ENCODE measurements at regions of chr1 and their contacts with region 1.

Region 1: GRCh38 chr1:172144445-172145061 is 275.9 kb upstream of the C1orf105 start:
- DNase-seq: peak; percentile 82 to 91 (median 87)
- H3K4me3 ChIP-seq: peak overlapping the region; percentile 38
- H3K27ac ChIP-seq: peak overlapping the region; percentile 54 to 89
- H3K4me1 ChIP-seq: no peaks in the 10 kb centered on the region
- H3K27me3 ChIP-seq: no peaks in the 10 kb centered on the region
- CTCF ChIP-seq: no peak
- EP300 ChIP-seq: no peak
- POLR2A ChIP-seq: peak; percentile 86

Region 2: DNA sequence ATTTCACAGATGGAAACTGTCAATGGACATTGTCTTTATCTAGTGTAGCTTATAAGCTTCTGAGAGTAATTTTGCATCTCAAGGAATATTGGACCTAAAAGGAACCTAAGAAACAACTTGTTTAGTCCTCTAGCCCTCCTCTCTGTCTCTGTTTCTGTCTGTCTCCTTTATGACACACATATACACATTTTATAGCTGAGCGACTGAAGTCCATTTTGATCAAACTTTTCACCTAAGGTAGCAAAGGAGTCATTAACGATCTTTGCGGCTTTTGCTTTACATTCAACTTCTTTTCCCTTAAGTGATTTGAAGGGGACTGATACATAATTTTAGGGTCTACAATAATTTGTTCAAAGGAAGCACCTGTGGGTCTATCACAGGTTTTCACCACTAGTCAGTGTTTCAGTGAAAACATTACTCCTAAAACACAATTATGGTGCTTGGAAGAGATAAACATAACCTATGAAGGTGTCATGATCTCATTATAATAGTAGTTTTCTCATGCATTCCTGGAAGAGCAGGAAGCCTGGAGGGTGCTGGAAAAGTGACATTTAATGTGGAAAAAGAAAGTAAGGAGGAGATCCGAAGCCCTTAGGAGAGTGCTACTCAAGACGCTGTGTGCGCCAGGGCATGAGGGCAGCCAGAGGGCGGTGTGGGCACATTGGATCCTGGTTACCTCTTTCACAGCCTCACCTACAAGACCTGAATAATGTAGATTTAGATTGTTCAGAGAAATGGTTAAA is 54.6 kb before region 1 on chr1:
- intact Hi-C with region 1: no loop called
- DNase-seq: peak in 4 of 5 donors; percentile 41 to 61 (median 54)
- H3K4me3 ChIP-seq: no peak overlapping the region
- H3K27ac ChIP-seq: no peak overlapping the region
- H3K4me1 ChIP-seq: no peaks in the 10 kb centered on the region
- H3K27me3 ChIP-seq: no peaks in the 10 kb centered on the region
- CTCF ChIP-seq: peak in 1 of 3 donors; percentile 28
- EP300 ChIP-seq: no peak
- POLR2A ChIP-seq: no peak

Region 3: DNA sequence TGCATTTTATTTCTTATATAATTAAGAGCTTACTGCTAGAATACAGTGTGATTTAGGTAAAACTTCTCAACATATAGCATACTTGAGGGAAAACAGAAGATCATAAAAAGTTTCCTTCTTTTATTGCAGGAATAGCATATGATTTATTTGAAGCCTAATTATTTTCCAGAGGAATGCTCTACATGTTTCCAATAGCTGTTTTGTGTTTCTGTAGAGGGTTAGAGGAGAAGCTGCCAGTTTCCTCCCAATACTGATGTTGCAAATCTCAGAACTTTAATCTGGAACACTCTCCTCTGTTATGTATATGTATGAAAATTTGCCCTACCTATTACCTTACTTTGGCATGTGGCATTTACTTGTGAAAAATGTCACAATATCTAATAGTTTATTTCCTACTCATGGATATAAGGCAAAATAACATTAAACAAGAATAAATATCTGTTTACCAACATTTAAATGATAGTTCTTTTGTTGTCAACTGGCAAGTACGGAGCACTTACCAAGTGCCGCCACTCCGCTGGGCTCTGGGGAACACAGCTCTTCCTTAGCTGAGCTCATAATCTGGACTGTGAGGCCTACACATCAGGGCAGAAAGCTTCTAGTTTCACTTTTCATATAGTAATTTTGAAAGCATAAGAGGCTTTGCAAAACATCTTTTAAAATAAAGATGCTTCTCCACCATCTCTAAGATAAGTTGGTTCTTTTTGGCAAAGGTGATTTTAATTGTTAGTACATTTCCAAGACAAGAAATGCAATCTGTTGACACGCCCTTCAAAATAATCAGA is 36.1 kb after region 1 on chr1:
- intact Hi-C with region 1: loop called in 1 of 4 experiments (anchors 5 kb)
- DNase-seq: peak; percentile 42 to 55 (median 50)
- H3K4me3 ChIP-seq: peak overlapping the region; percentile 15
- H3K27ac ChIP-seq: peak overlapping the region in 1 of 2 donors; percentile 82
- H3K4me1 ChIP-seq: peaks cover 8% of the 10 kb centered on the region
- H3K27me3 ChIP-seq: no peaks in the 10 kb centered on the region
- CTCF ChIP-seq: no peak
- EP300 ChIP-seq: no peak
- POLR2A ChIP-seq: no peak

Region 4: DNA sequence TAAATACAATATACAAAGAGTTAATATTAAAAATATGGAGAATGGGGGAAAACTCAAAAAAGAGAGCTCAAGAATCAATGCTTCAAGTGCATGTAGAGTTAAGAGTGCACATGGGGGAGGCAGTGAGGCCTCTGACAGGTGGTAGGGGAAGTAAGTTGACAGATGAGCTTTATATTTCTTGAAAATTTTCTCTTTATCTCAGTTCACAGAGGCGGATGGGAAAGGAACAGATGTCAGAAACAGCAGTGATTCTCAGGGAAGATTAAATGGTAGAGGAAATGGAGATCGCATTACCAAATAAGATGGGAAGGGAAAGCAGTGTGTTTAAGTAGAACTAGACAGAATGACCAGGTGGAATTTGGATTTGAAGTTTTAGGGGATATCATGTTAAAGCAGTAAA is 75.8 kb after region 1 on chr1:
- intact Hi-C with region 1: no loop called
- DNase-seq: no peak
- H3K4me3 ChIP-seq: no peak overlapping the region
- H3K27ac ChIP-seq: no peak overlapping the region
- H3K4me1 ChIP-seq: no peaks in the 10 kb centered on the region
- H3K27me3 ChIP-seq: no peaks in the 10 kb centered on the region
- CTCF ChIP-seq: no peak
- EP300 ChIP-seq: no peak
- POLR2A ChIP-seq: no peak

Region 5: GRCh38 chr1:172357753-172358385 is 213.3 kb after region 1 on chr1:
- intact Hi-C with region 1: loop called in 1 of 4 experiments (anchors 10 kb)
- DNase-seq: no peak
- H3K4me3 ChIP-seq: peak overlapping the region; percentile 19
- H3K27ac ChIP-seq: peak overlapping the region in 1 of 2 donors; percentile 58
- H3K4me1 ChIP-seq: peaks cover 10% of the 10 kb centered on the region
- H3K27me3 ChIP-seq: no peaks in the 10 kb centered on the region
- CTCF ChIP-seq: no peak
- EP300 ChIP-seq: no peak
- POLR2A ChIP-seq: no peak

Region 6: DNA sequence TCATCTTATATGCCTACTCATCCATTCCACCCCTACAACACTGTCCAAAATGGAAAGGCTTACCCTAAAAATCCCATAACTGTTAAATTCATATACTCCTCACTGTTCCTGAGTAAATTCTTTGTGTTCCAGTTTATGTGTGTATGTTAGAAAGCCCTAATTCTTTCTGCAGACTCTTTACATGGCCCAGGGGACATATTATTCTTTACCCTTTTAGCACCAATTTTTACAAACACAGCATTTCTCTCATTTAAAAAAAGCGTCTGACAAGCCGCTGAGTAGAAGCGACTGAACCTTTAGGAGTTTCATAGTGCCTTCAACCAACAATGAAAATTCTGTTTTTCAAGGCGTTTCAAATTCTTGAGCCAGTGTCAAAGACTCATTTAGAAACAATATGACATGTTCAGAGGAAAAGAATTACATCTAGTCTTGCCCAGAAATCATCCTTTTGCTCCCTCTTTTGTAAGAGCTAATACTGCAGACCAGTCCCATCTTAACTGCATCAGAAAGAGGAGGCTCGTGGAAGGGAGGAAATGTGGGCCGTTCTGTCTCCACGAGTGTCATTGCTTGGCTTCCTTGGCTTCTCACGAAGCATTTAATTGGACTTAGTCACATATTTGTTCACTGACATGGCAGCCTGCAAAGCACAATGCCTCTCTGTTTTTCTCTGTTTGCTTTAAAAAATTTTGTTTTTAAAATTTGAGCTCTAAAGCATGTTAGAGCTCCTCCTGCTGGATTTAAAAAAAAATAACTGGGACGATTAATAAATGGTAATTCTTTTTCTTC is 254.6 kb after region 1 on chr1:
- intact Hi-C with region 1: loop called in 1 of 4 experiments (anchors 5 kb)
- DNase-seq: peak in 4 of 5 donors; percentile 47 to 78 (median 49)
- H3K4me3 ChIP-seq: peak overlapping the region; percentile 6
- H3K27ac ChIP-seq: peak overlapping the region in 1 of 2 donors; percentile 65
- H3K4me1 ChIP-seq: peaks cover 3% of the 10 kb centered on the region
- H3K27me3 ChIP-seq: no peaks in the 10 kb centered on the region
- CTCF ChIP-seq: peak; percentile 43 to 64 (median 60)
- EP300 ChIP-seq: no peak
- POLR2A ChIP-seq: no peak